H1 (cell line): ENCODE measurements at regions of chr2 and their contacts with region 1.

Region 1: DNA sequence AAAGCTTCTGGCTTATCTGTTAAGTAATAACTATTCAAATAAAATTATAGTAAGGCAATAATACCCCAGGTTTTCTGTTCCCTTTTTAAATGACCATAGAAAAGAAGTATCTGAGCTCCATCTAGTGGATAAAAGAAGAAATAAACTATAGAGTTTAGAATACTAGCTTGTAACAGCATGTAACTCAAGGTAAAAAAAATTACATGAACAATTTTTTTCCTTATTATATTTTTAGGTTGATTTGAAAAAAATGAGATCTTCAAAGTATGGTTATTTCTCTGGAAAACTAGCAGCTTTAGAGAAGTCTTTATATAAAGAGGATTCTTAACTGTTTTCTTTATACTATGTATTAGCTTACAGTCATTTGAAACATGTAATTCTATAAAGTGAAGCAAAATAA is 58.1 kb downstream of the NCKAP1 start:
- DNase-seq: no peak
- H3K4me3 ChIP-seq: no peak overlapping the region
- H3K27ac ChIP-seq: no peak overlapping the region
- H3K4me1 ChIP-seq: no peaks in the 10 kb centered on the region
- H3K27me3 ChIP-seq: no peaks in the 10 kb centered on the region
- CTCF ChIP-seq: peak in 2 of 3 experiments; percentile 10 to 18; a peak in 2 of 4 replicates
- EP300 ChIP-seq: no peak
- POLR2A ChIP-seq: no peak
- RAD21 ChIP-seq: peak in 1 of 2 experiments; percentile 42

Region 2: GRCh38 chr2:182763311-182763912 is 216.7 kb before region 1 on chr2:
- CTCF ChIA-PET with region 1: interaction called, 65 read pairs
- POLR2A ChIA-PET with region 1: no interaction called
- DNase-seq: no peak
- H3K4me3 ChIP-seq: no peak overlapping the region
- H3K27ac ChIP-seq: no peak overlapping the region
- H3K4me1 ChIP-seq: no peaks in the 10 kb centered on the region
- H3K27me3 ChIP-seq: no peaks in the 10 kb centered on the region
- CTCF ChIP-seq: peak in 2 of 3 experiments; percentile 64; a peak in 3 of 4 replicates
- EP300 ChIP-seq: no peak
- POLR2A ChIP-seq: no peak
- RAD21 ChIP-seq: peak; percentile 40 to 59; a peak in 3 of 4 replicates

Region 3: DNA sequence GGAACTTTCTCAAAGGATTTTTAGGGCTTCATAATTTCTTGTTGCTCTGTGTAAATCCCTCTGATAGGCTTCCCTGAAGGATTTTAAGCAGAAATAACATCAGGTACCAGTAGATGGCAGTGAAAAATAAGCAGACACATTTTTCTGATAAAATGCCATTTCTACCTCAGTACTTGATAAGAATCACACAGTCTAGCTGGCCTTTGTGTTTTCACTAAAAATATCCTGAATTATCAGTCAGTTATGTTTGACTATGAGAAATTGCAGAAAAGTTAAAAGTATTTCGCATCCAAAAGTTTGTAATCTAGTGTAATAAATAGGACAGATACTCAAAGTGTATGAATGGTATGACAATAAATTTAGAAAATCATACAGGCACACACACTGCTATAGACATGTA is 195.3 kb before region 1 on chr2:
- CTCF ChIA-PET with region 1: interaction called, 30 read pairs
- POLR2A ChIA-PET with region 1: interaction called, 4 read pairs
- DNase-seq: no peak
- H3K4me3 ChIP-seq: no peak overlapping the region
- H3K27ac ChIP-seq: no peak overlapping the region
- H3K4me1 ChIP-seq: no peaks in the 10 kb centered on the region
- H3K27me3 ChIP-seq: no peaks in the 10 kb centered on the region
- CTCF ChIP-seq: peak in 2 of 3 experiments; percentile 43 to 55; a peak in 2 of 4 replicates
- EP300 ChIP-seq: no peak
- POLR2A ChIP-seq: no peak
- RAD21 ChIP-seq: peak; percentile 77 to 78

Region 4: GRCh38 chr2:182836451-182836850 is 143.7 kb before region 1 on chr2:
- CTCF ChIA-PET with region 1: no interaction called
- POLR2A ChIA-PET with region 1: no interaction called
- DNase-seq: no peak
- H3K4me3 ChIP-seq: no peak overlapping the region
- H3K27ac ChIP-seq: no peak overlapping the region
- H3K4me1 ChIP-seq: peaks cover 0 to 4% (median 0%) of the 10 kb centered on the region in 4 experiments; a peak in 4 of 7 replicates
- H3K27me3 ChIP-seq: no peaks in the 10 kb centered on the region
- CTCF ChIP-seq: no peak
- EP300 ChIP-seq: no peak
- POLR2A ChIP-seq: no peak
- RAD21 ChIP-seq: no peak

Region 5: GRCh38 chr2:182951948-182952663 is 28.0 kb before region 1 on chr2:
- CTCF ChIA-PET with region 1: interaction called, 10 read pairs
- POLR2A ChIA-PET with region 1: no interaction called
- DNase-seq: no peak
- H3K4me3 ChIP-seq: no peak overlapping the region
- H3K27ac ChIP-seq: no peak overlapping the region
- H3K4me1 ChIP-seq: no peaks in the 10 kb centered on the region
- H3K27me3 ChIP-seq: no peaks in the 10 kb centered on the region
- CTCF ChIP-seq: no peak
- EP300 ChIP-seq: no peak
- POLR2A ChIP-seq: no peak
- RAD21 ChIP-seq: no peak

Region 6: DNA sequence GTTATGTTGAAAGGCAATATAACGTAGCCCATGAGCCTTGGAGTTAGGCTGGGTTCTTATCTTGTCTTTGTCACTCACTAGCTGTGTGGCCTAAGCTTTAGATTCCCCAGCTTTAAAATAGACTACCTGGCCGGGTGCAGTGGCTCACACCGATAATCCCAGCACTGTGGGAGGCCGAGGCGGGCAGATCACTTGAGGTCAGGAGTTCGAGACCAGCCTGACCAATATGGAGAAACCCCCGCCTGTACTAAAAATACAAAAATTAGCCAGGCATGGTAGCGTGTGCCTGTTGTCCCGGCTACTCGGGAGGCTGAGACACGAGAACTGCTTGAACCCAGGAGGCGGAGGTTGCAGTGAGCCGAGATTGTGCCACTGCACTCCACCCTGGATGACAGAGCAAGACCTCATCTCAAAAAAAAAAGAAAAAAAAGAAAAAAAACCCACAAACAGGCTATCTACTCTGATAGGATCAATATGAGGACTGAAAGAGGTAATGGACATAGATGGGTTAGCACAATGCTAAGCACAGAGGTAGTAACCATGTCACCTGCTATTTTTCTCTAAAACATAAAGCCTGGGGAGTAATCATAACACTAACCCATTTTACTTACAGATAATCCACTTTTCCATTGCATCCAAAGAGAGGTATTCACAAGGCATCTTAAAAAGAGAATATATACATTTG is 14.3 kb after region 1 on chr2:
- CTCF ChIA-PET with region 1: interaction called, 26 read pairs
- POLR2A ChIA-PET with region 1: interaction called, 3 read pairs
- DNase-seq: no peak
- H3K4me3 ChIP-seq: no peak overlapping the region
- H3K27ac ChIP-seq: no peak overlapping the region
- H3K4me1 ChIP-seq: no peaks in the 10 kb centered on the region
- H3K27me3 ChIP-seq: no peaks in the 10 kb centered on the region
- CTCF ChIP-seq: no peak
- EP300 ChIP-seq: no peak
- POLR2A ChIP-seq: no peak
- RAD21 ChIP-seq: no peak

Region 7: DNA sequence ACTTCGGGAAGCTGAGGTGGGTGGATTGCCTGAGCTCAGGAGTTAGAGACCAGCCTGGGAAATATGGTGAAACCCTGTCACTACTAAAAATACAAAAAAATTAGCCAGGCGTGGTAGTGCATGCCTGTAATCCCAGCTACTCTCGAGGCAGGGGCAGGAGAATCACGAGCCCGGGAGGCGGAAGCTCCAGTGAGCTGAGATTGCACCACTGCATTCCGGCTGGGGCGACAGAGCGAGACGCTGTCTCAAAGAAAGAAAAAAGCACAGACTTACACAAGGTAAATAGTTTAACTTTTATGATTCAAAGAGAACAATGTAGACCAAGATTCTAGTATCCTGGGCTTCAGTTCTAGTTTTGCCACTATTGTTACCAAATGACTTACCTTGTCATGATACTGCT is 20.7 kb after region 1 on chr2:
- CTCF ChIA-PET with region 1: interaction called, 26 read pairs
- POLR2A ChIA-PET with region 1: no interaction called
- DNase-seq: no peak
- H3K4me3 ChIP-seq: no peak overlapping the region
- H3K27ac ChIP-seq: no peak overlapping the region
- H3K4me1 ChIP-seq: no peaks in the 10 kb centered on the region
- H3K27me3 ChIP-seq: no peaks in the 10 kb centered on the region
- CTCF ChIP-seq: no peak
- EP300 ChIP-seq: no peak
- POLR2A ChIP-seq: no peak
- RAD21 ChIP-seq: no peak

Region 8: GRCh38 chr2:183011743-183012142 is 31.6 kb after region 1 on chr2:
- CTCF ChIA-PET with region 1: interaction called, 12 read pairs
- POLR2A ChIA-PET with region 1: no interaction called
- DNase-seq: no peak
- H3K4me3 ChIP-seq: no peak overlapping the region
- H3K27ac ChIP-seq: no peak overlapping the region
- H3K4me1 ChIP-seq: peaks cover 2 to 18% (median 3%) of the 10 kb centered on the region in 4 experiments; a peak in 5 of 7 replicates
- H3K27me3 ChIP-seq: no peaks in the 10 kb centered on the region
- CTCF ChIP-seq: no peak
- EP300 ChIP-seq: no peak
- POLR2A ChIP-seq: no peak
- RAD21 ChIP-seq: no peak